ENCODE measurements at regions of chr11 and their contacts with region 1.

Region 1: DNA sequence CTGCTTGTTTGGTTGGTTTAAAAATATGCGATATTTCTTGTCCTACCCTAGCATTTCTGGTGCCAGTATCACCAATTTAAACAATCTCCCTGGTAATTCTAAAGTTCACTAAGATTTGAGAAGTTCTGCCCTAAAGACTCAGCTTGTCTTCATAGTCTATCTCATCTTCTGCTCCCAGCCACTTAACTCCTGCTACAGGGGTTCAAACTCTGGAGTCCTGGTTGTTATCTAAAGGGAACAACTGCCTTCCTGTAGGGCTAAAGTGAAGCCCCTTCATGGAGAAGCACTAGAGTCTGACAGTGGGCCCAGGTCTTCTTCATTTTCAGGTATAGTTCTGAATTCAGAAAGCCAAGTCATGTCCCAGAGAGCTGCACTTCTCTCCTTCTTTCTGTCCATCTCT is 73.2 kb downstream of the CTNND1 start:
- DNase-seq: no peak
- ATAC-seq: no peak
- H3K4me3 ChIP-seq: no peak overlapping the region
- H3K27ac ChIP-seq: no peak overlapping the region
- H3K4me1 ChIP-seq: no peaks in the 10 kb centered on the region
- H3K27me3 ChIP-seq: no peaks in the 10 kb centered on the region
- CTCF ChIP-seq: no peak
- EP300 ChIP-seq: no peak
- POLR2A ChIP-seq: no peak
- RAD21 ChIP-seq: no peak

Region 2: DNA sequence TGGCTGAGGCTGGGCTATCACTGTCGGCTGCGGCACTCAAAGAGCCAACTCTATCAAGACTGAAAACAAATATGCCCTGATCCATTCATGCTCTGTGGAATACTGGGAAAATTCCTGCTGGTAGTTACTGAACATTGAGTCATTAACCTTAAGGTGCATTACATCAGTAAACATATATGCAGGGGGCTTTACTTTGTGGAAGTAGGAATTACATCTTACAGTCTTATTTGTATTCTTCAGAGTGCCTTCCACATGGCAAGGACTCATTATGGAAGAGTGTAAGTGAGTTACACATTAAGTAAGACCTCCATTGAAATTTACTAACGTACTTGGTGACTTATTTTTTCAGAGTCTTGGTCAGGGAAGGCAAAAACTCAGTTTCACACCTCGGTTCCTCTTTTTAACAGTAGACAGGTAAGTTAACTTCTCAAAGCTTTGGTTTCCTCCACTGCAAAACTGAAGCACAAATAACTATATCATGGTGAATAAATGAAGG is 668.6 kb after region 1 on chr11:
- CTCF ChIA-PET with region 1: no interaction called
- POLR2A ChIA-PET with region 1: no interaction called
- in situ Hi-C with region 1: loop called (anchors 25 kb)
- intact Hi-C with region 1: loop called (anchors 10 kb)
- DNase-seq: no peak
- ATAC-seq: no peak
- H3K4me3 ChIP-seq: no peak overlapping the region
- H3K27ac ChIP-seq: no peak overlapping the region
- H3K4me1 ChIP-seq: no peaks in the 10 kb centered on the region
- H3K27me3 ChIP-seq: peaks cover 0 to 7% of the 10 kb centered on the region in 2 experiments; a peak in 2 of 5 replicates
- CTCF ChIP-seq: no peak
- EP300 ChIP-seq: no peak
- POLR2A ChIP-seq: no peak
- RAD21 ChIP-seq: no peak